Naive thymus-derived CD4-positive, alpha-beta T cell (primary cell): ENCODE measurements at regions of chr10 and their contacts with region 1.

Region 1: DNA sequence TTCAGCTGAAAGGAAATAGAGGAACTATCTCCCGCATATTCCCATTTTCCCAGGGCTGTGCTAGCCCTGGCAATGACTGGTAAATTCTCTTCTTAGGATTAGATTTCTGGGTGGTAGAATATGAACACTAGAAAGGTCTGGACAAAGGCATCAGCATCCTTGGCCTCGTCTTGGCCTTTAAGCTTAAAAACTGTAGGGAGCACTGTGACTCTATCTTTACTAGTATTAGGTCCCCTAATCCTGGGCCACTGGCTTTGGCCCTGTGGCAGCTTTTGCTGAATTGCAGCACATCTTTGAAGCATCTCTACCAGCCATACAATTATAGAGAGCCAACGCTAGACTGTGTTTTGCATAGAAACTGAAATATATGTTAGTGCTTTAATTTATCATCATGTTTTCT is 41.5 kb upstream of the EBLN1 start:
- DNase-seq: peak in 2 of 9 donors; percentile 23 to 25
- ATAC-seq: peak; percentile 55
- H3K4me3 ChIP-seq: no peak overlapping the region
- H3K4me3 Mint-ChIP-seq: peak overlapping the region in 2 of 10 donors; percentile 0 to 29
- H3K27ac ChIP-seq: no peak overlapping the region
- H3K27ac Mint-ChIP-seq: peak overlapping the region in 1 of 9 donors; percentile 37
- H3K4me1 ChIP-seq: peaks cover 0 to 14% of the 10 kb centered on the region in 2 donors
- H3K4me1 Mint-ChIP-seq: peaks cover 6 to 43% (median 18%) of the 10 kb centered on the region in 7 donors
- H3K27me3 ChIP-seq: no peaks in the 10 kb centered on the region
- H3K27me3 Mint-ChIP-seq: peaks cover 14 to 47% (median 25%) of the 10 kb centered on the region in 5 donors

Region 2: DNA sequence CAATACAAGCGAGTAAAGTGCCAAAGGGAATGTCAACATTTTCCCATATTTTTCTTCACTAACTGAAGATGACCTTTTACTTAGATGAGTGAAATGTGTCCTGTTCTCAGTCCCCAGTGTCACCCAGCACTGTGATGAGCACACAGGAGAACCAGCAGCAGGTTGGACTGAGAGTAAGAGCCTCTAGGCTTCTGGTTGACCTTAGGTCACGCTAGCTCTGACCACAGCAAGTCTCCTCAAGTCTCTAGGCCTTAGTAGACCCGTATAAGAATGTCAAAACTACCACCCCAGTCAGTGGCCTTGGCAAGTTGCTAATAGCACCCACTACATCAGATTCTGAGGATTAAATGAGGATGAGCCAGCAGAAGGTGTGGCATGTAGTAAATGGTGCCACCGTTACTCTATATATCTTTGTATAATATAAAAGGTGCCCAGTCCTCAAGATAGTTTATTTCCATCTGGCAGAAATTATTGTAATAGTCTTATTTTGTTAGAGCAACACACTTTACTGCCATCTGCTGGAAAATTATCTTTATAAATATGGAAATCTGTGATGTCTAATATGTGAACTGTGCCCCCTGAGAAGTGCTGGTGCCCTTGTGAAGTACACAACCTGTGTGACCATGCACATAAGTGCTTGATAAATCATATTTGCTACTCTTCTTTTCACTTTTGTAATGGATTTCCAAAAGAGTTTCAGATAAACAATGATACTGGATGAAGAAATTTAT is 161.7 kb after region 1 on chr10:
- CTCF ChIA-PET with region 1: interaction called, 4 read pairs
- POLR2A ChIA-PET with region 1: no interaction called
- intact Hi-C with region 1: loop called (anchors 1 to 5 kb)
- DNase-seq: peak in 4 of 9 donors; percentile 15 to 41 (median 40)
- ATAC-seq: peak; percentile 54
- H3K4me3 ChIP-seq: no peak overlapping the region
- H3K4me3 Mint-ChIP-seq: no peak overlapping the region
- H3K27ac ChIP-seq: no peak overlapping the region
- H3K27ac Mint-ChIP-seq: no peak overlapping the region
- H3K4me1 ChIP-seq: no peaks in the 10 kb centered on the region
- H3K4me1 Mint-ChIP-seq: peaks cover 0 to 3% (median 0%) of the 10 kb centered on the region in 7 donors
- H3K27me3 ChIP-seq: no peaks in the 10 kb centered on the region
- H3K27me3 Mint-ChIP-seq: peaks cover 0 to 4% (median 0%) of the 10 kb centered on the region in 5 donors